GM12878 (cell line): ENCODE measurements at regions of chr10 and their contacts with region 1.

Region 1: GRCh38 chr10:74051736-74052342 is 53.9 kb downstream of the VCL start:
- DNase-seq: no peak
- ATAC-seq: 0 out of 3 replicates have a peak, but pooled peaks have one; percentile 16
- H3K4me3 ChIP-seq: no peak overlapping the region
- H3K27ac ChIP-seq: no peak overlapping the region
- H3K4me1 ChIP-seq: peaks cover 11% of the 10 kb centered on the region
- H3K27me3 ChIP-seq: no peaks in the 10 kb centered on the region
- CTCF ChIP-seq: no peak
- EP300 ChIP-seq: no peak
- POLR2A ChIP-seq: no peak
- RAD21 ChIP-seq: no peak

Region 2: DNA sequence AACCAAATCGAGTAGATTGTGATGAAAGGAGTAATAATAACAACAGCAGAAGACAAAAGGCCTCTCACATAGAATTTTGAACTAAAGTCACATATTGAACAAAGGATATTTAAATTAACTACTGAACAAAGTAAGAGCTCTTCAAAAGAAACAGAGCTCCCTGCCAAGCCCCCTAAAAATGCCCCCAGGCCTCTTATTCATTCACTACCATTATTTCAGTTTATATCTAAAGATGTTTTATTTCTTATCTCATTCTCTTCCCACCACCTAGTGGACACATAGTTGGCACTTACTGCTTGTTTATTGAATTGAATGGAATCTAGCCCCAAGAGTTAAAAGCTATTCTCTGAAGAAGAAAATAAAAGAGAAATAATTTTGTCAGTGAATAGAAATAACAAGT is 16.5 kb before region 1 on chr10:
- CTCF ChIA-PET with region 1: interaction called, 5 read pairs
- POLR2A ChIA-PET with region 1: interaction called, 4 read pairs
- RAD21 ChIA-PET with region 1: interaction called, 5 read pairs
- SMC1A ChIA-PET with region 1: interaction called, 19 read pairs
- in situ Hi-C with region 1: no loop called
- intact Hi-C with region 1: no loop called
- DNase-seq: no peak
- ATAC-seq: no peak
- H3K4me3 ChIP-seq: no peak overlapping the region
- H3K27ac ChIP-seq: no peak overlapping the region
- H3K4me1 ChIP-seq: peaks cover 11% of the 10 kb centered on the region
- H3K27me3 ChIP-seq: no peaks in the 10 kb centered on the region
- CTCF ChIP-seq: peak in 1 of 3 experiments; percentile 14; a peak in 2 of 6 replicates
- EP300 ChIP-seq: no peak
- POLR2A ChIP-seq: no peak
- RAD21 ChIP-seq: peak; percentile 46; the same call in 1 of the 2 replicates